CD8-positive, alpha-beta memory T cell (primary cell): ENCODE measurements at regions of chrX and their contacts with region 1.

Region 1: DNA sequence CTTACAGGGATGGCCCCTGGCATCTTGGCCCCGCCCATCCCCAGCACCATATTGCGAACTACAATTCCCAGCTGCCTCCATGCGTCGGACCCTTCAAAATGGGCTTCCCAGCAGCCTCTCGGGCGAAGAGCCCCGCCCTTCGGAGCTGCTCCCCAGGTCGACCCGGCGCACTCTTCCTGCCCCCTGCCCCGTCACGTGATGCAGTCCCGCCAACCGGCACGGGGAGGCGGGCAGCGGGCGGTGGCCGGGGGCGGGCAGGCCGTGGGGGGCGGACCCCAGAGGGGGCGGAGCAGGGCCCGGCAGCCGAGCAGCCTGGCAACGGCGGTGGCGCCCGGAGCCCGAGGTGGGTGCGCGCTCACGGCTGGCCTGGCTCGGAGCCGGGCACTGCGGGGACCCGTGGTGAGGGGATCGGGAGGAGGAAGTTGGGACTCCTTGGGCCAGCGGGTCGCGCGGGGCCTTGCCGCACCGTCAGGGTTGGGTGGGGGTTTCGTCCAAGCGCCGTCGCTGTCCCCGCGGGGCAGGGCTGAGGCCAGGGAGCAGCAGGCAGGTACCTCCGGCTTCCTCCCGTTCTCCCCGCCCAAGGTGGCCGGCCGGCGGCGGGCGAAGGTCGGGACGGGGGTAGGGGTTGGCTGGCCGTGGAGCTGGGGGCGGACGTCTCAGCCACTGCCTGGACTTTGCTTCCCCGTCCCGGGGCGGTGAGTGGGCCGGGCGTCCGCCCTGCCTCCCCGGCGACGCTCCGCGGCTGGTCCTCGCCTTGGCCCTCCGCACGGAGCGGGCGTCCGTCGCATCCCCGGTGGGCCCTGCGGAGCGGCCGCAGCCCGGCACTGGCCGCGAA is at the start of gene MTM1:
- DNase-seq: peak; percentile 81 to 94 (median 90)
- H3K4me3 ChIP-seq: peak within 1 kb of the TSS; percentile 66
- H3K4me3 Mint-ChIP-seq: peak within 1 kb of the TSS; percentile 85 to 93 (median 89)
- H3K27ac ChIP-seq: peak within 1 kb of the TSS; percentile 69
- H3K27ac Mint-ChIP-seq: peak within 1 kb of the TSS; percentile 78 to 93 (median 86)
- H3K4me1 ChIP-seq: peaks cover 40% of the 10 kb centered on the region
- H3K4me1 Mint-ChIP-seq: peaks cover 41 to 49% (median 42%) of the 10 kb centered on the region in 3 donors
- H3K27me3 ChIP-seq: no peaks in the 10 kb centered on the region
- H3K27me3 Mint-ChIP-seq: peaks cover 0 to 2% of the 10 kb centered on the region in 2 donors
- total RNA-seq, gene MTM1: 16.6 to 19.5 TPM

Region 2: DNA sequence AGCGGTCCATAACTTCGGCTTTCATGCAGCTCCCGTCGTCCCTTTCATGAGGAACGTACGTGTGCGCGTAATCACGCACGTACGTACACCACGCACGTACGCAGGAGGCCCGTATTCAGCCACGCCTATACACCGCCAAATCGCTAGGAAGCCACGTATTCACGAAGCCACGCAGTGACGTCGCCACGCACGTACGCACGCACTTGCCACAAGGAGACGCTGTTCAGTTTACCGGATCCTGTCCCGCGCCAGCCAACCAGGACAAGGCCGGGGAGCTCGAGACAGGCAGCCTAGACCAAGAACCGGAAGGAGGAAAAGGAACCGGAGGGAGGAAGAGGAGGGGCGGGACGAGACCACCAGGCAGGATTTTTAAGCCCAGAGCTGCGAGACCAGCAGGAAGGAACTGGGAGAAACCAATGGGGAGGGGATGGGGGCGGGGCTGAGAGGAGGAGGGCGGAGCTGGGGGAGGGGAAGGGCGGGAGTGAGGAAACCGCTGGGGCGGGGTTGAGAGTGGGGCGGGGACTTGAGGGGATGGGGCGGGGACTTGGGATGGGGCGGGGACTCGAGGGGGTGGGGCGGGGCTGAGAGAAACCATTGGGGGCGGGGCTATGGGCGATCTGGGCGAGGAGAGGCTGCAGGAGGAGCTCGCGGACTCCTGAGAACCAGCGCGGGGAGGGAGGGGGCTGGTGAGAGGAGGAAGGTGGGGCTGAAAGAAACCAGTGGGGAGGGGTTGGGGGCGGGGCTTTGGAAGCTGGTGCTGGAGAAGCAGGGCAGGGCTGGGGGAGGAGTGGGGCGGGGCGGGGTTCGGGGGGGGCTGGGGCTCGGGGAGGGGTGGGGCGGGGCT is 629.9 kb before region 1 on chrX and contains the start of gene EOLA2:
- CTCF ChIA-PET with region 1: no interaction called
- POLR2A ChIA-PET with region 1: interaction called, 10 read pairs
- DNase-seq: peak; percentile 85 to 96 (median 91)
- H3K4me3 ChIP-seq: peak within 1 kb of the TSS; percentile 73
- H3K4me3 Mint-ChIP-seq: peak within 1 kb of the TSS; percentile 84 to 98 (median 92)
- H3K27ac ChIP-seq: peak within 1 kb of the TSS; percentile 91
- H3K27ac Mint-ChIP-seq: peak within 1 kb of the TSS; percentile 87 to 100 (median 96)
- H3K4me1 ChIP-seq: peaks cover 6% of the 10 kb centered on the region
- H3K4me1 Mint-ChIP-seq: peaks cover 4 to 11% (median 6%) of the 10 kb centered on the region in 3 donors
- H3K27me3 ChIP-seq: no peaks in the 10 kb centered on the region
- H3K27me3 Mint-ChIP-seq: no peaks in the 10 kb centered on the region
- total RNA-seq, gene EOLA2: 64.1 to 66.1 TPM

Region 3: GRCh38 chrX:150212672-150213480 is 355.7 kb before region 1 on chrX:
- CTCF ChIA-PET with region 1: no interaction called
- POLR2A ChIA-PET with region 1: no interaction called
- DNase-seq: no peak
- H3K4me3 ChIP-seq: no peak overlapping the region
- H3K4me3 Mint-ChIP-seq: no peak overlapping the region
- H3K27ac ChIP-seq: no peak overlapping the region
- H3K27ac Mint-ChIP-seq: no peak overlapping the region
- H3K4me1 ChIP-seq: no peaks in the 10 kb centered on the region
- H3K4me1 Mint-ChIP-seq: no peaks in the 10 kb centered on the region
- H3K27me3 ChIP-seq: no peaks in the 10 kb centered on the region
- H3K27me3 Mint-ChIP-seq: peaks cover 0 to 4% of the 10 kb centered on the region in 2 donors

Region 4: DNA sequence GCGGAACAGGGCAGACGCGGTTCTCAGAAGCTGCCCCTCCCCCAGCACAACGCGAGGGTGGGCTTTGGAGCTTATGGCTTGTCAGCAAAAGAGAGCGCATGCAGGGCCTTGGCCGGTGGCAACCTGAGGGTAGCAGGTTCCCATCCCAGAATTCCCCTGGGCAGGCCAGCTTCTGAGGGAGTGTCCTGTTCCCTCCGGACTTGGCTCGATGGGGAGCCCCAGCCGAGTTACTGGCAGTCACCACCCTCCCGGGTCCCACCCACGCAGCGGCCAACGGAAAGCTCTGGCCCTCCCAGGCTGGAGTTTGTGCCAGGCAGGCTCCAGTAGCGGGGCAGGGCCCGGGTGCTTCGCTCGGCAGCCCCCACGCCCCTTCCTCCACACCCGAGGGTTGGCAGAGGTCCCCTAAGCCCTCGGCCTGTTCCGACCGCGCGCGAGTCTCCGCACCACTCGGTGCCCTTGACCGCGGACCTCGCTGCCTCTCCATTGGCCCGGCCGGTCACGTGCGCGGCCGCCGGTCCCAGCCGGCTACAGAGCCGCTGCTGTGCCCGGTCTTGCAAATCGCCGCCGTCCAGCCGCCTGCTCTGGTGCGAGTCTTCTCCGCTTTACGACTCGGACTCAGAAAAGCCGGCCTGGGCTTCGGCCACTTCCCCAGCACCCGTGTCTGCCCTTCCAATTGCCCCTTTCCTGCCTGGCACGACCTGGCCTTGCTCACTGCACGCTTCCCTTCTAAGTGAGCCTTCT is 21.0 kb before region 1 on chrX:
- CTCF ChIA-PET with region 1: interaction called, 3 read pairs
- POLR2A ChIA-PET with region 1: interaction called, 11 read pairs
- DNase-seq: peak in 1 of 5 donors; percentile 4
- H3K4me3 ChIP-seq: peak overlapping the region; percentile 26
- H3K4me3 Mint-ChIP-seq: peak overlapping the region; percentile 69 to 85 (median 74)
- H3K27ac ChIP-seq: no peak overlapping the region
- H3K27ac Mint-ChIP-seq: peak overlapping the region in 5 of 8 donors; percentile 26 to 82 (median 76)
- H3K4me1 ChIP-seq: peaks cover 23% of the 10 kb centered on the region
- H3K4me1 Mint-ChIP-seq: peaks cover 11 to 25% (median 24%) of the 10 kb centered on the region in 3 donors
- H3K27me3 ChIP-seq: no peaks in the 10 kb centered on the region
- H3K27me3 Mint-ChIP-seq: peaks cover 0 to 8% of the 10 kb centered on the region in 2 donors

Region 5: GRCh38 chrX:150680978-150681377 is 112.4 kb after region 1 on chrX:
- CTCF ChIA-PET with region 1: no interaction called
- POLR2A ChIA-PET with region 1: no interaction called
- DNase-seq: no peak
- H3K4me3 ChIP-seq: no peak overlapping the region
- H3K4me3 Mint-ChIP-seq: no peak overlapping the region
- H3K27ac ChIP-seq: no peak overlapping the region
- H3K27ac Mint-ChIP-seq: no peak overlapping the region
- H3K4me1 ChIP-seq: no peaks in the 10 kb centered on the region
- H3K4me1 Mint-ChIP-seq: peaks cover 4 to 8% (median 7%) of the 10 kb centered on the region in 3 donors
- H3K27me3 ChIP-seq: no peaks in the 10 kb centered on the region
- H3K27me3 Mint-ChIP-seq: peaks cover 0 to 21% of the 10 kb centered on the region in 2 donors